ENCODE measurements at regions of chr7 and their contacts with region 1.

Region 1: DNA sequence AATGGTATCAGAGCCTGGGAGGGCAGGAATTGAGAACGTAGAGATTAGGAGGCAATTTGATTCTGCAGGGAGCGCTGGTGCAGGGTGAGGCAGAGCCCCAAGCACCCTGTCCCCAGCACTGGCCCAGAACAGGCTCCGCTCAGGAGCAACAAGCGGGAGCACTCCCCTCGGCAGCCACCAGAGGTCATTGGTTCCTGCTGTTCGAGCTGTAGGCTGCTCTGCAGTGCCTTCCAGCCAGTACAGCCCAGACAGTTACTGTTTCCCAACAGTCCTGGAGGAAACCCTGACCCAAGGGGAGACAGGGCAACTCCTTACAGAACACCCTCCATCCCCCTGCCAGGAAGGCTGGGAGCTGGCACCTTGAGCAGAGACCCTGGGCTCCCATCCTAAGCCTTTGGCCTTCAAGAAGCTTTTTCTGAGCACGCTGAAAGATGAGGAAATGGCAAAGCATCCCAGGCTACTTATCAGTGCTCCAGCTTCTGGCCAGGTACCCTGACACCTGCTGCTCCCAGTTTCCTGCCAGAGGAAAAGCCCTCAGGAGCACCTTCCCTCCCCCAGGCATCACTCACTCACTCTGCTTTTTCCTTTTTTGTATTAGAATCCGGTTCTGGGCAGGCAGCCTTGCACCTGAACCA is 71.2 kb upstream of the EFCAB10 start:
- DNase-seq: peak; percentile 11 to 77
- H3K4me3 ChIP-seq: no peak overlapping the region
- H3K27ac ChIP-seq: no peak overlapping the region
- H3K4me1 ChIP-seq: peaks cover 0 to 6% of the 10 kb centered on the region in 2 donors
- H3K27me3 ChIP-seq: no peaks in the 10 kb centered on the region
- CTCF ChIP-seq: peak; percentile 66 to 76 (median 74)

Region 2: GRCh38 chr7:104572554-104572953 is 1079.9 kb before region 1 on chr7:
- intact Hi-C with region 1: no loop called
- DNase-seq: no peak
- H3K4me3 ChIP-seq: no peak overlapping the region
- H3K27ac ChIP-seq: no peak overlapping the region
- H3K4me1 ChIP-seq: no peaks in the 10 kb centered on the region
- H3K27me3 ChIP-seq: no peaks in the 10 kb centered on the region
- CTCF ChIP-seq: no peak

Region 3: GRCh38 chr7:105538339-105538738 is 114.1 kb before region 1 on chr7:
- intact Hi-C with region 1: no loop called
- DNase-seq: no peak
- H3K4me3 ChIP-seq: no peak overlapping the region
- H3K27ac ChIP-seq: no peak overlapping the region
- H3K4me1 ChIP-seq: peaks cover 0 to 4% of the 10 kb centered on the region in 2 donors
- H3K27me3 ChIP-seq: no peaks in the 10 kb centered on the region
- CTCF ChIP-seq: no peak

Region 4: GRCh38 chr7:105602325-105603305 is 49.9 kb before region 1 on chr7:
- intact Hi-C with region 1: no loop called
- DNase-seq: no peak
- H3K4me3 ChIP-seq: no peak overlapping the region
- H3K27ac ChIP-seq: no peak overlapping the region
- H3K4me1 ChIP-seq: no peaks in the 10 kb centered on the region
- H3K27me3 ChIP-seq: no peaks in the 10 kb centered on the region
- CTCF ChIP-seq: no peak

Region 5: GRCh38 chr7:106001886-106002285 is 349.4 kb after region 1 on chr7:
- intact Hi-C with region 1: loop called (anchors 2 kb)
- DNase-seq: no peak
- H3K4me3 ChIP-seq: no peak overlapping the region
- H3K27ac ChIP-seq: no peak overlapping the region
- H3K4me1 ChIP-seq: no peaks in the 10 kb centered on the region
- H3K27me3 ChIP-seq: no peaks in the 10 kb centered on the region
- CTCF ChIP-seq: no peak

Region 6: GRCh38 chr7:106009403-106010226 is 357.1 kb after region 1 on chr7:
- intact Hi-C with region 1: loop called (anchors 2 kb)
- DNase-seq: peak; percentile 54 to 85
- H3K4me3 ChIP-seq: peak overlapping the region in 1 of 2 donors; percentile 40
- H3K27ac ChIP-seq: no peak overlapping the region
- H3K4me1 ChIP-seq: no peaks in the 10 kb centered on the region
- H3K27me3 ChIP-seq: no peaks in the 10 kb centered on the region
- CTCF ChIP-seq: peak; percentile 83 to 98 (median 86)

Region 7: DNA sequence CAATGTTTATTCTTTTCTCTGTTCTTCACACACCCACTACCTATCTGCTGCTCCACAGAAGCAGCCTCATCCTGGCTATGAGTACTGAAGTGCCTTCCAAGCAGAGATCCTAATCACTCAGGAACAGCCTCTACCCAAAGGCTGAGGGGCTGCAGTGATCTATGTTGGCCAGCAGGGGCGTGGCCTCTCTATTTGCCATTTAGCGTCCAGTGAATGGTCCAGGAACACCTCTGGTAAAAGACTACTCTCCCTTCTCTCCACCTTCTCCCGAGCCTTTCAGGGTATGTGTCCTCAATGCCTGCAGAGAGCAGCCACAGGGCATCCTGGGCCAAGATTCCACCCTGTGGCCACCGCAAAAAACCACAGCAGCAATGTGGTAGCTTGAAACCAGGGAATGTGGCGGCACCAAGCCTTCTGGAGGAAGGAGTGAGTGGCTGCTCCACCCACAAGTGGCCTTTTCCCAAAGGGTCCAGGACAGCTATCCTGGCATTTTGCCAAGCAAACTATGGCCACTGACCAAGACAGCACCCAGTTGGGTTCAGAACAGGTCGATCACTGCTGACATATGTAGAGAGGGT is 388.8 kb after region 1 on chr7:
- intact Hi-C with region 1: loop called (anchors 1 kb)
- DNase-seq: no peak
- H3K4me3 ChIP-seq: no peak overlapping the region
- H3K27ac ChIP-seq: no peak overlapping the region
- H3K4me1 ChIP-seq: no peaks in the 10 kb centered on the region
- H3K27me3 ChIP-seq: no peaks in the 10 kb centered on the region
- CTCF ChIP-seq: peak; percentile 25 to 66 (median 46)

Region 8: DNA sequence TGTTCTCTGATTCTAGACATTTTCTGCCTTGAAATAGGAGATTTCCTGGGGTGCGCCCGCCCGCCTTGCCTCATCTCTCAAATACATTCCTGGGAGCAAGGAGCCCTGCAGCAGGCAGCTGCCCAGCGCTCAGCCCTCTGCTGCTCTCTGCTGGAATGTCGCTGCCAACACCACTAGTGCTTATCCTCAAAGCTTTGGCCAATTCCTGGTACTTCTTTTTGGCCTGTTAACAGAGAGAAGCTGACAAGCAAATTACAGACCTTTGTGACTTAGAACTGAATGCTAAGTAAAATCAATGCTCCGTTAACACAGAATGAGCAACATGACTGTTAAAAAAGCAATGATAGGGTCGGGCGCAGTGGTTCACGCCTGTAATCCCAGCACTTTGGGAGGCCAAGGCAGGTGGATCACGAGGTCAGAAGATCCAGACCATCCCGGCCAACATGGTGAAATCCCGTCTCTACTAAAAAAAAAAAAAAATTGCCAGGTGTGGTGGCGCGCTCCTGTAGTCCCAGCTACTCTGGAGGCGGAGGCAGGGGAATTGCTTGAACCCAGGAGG is 501.5 kb after region 1 on chr7:
- intact Hi-C with region 1: loop called (anchors 5 kb)
- DNase-seq: peak in 1 of 2 donors; percentile 89
- H3K4me3 ChIP-seq: no peak overlapping the region
- H3K27ac ChIP-seq: no peak overlapping the region
- H3K4me1 ChIP-seq: no peaks in the 10 kb centered on the region
- H3K27me3 ChIP-seq: no peaks in the 10 kb centered on the region
- CTCF ChIP-seq: peak; percentile 85 to 96 (median 91)

Measured in ascending aorta (tissue), 2 donors.